Naive thymus-derived CD8-positive, alpha-beta T cell (primary cell): ENCODE measurements at regions of chr14 and their contacts with region 1.

Region 1: DNA sequence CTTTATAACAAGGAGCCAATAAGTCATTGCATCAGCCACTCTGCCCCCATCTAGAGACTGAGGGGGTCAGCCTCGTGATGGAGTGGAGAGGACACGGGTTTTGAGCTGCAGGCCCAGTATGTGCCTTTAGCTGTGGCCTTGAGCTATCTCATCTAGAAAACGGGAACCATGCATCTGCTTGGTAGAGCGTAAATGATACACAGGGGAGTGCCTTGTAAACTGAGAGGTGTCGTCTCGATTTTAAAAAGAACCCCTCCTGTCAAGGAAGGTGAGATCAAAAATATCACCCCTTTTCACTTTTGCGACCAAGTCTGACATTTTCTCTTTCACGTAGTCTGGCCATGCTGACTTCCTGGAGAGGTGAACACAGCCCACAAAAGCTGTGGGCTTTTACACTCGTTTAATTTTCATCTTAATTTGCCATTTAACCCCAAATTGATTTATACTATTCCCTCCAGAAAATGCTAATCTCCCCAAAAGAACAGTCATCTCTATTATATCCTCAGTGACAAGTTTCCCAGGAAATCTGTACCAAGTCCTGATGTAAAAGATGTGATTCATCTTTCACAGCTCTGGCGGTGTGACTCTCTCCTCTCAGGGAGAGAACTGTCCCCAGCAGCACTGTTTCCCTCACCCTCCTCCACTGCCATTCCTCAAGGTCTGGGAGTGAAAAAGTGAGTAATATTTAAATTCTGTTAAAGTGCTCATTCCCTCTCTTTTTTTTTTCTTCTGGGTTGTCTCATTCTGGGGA is 30.6 kb downstream of the VCPKMT start:
- DNase-seq: peak in 3 of 10 donors; percentile 26 to 49 (median 37)
- ATAC-seq: no peak
- H3K4me3 Mint-ChIP-seq: peak overlapping the region; percentile 15 to 82 (median 68)
- H3K27ac Mint-ChIP-seq: peak overlapping the region; percentile 79 to 97 (median 93)
- H3K4me1 Mint-ChIP-seq: peaks cover 39 to 94% (median 88%) of the 10 kb centered on the region in 4 donors
- H3K27me3 Mint-ChIP-seq: no peaks in the 10 kb centered on the region

Region 2: DNA sequence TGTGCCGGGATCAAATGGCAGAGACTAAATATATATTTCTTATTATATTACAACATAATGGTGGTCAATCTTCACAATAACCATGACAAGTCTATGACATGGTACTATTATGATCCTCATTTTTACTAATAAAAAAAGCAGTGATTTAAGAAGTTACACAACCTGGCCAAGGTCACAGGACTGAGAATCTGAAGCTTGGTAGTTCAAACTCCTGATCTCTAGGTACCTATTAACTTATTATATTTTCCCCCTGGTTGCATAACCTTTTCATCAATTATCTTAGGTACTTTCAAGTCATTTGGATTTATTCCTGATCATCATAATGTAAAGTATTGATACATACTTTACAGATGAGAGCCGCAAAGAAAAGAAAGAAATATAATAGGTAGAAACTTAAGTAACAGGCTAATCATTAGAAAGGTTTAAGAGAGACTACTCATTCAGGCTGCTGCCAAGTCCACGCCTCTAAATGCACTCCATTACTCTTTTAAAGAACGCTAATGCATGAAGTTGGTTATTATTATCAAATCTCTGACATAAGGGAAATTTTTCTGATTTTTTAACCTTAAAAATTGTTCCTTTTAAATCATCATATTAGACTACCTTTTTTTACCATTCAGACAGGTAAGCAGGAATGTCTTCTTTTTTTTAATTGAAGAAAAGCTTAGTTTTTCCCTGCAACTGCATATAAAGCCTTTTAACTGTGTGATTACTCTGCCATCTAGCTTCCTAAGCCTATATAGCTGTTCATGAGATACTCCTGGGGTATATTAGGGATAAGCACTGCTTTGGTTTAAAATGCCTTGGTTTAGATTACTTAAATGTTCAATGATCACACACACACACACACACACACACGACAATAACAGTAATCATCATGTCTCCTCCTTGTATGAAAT is 535.2 kb before region 1 on chr14:
- POLR2A ChIA-PET with region 1: no interaction called
- DNase-seq: no peak
- ATAC-seq: no peak
- H3K4me3 Mint-ChIP-seq: no peak overlapping the region
- H3K27ac Mint-ChIP-seq: no peak overlapping the region
- H3K4me1 Mint-ChIP-seq: no peaks in the 10 kb centered on the region
- H3K27me3 Mint-ChIP-seq: peaks cover 0 to 3% (median 0%) of the 10 kb centered on the region in 5 donors

Region 3: GRCh38 chr14:49852301-49853157 is 233.2 kb before region 1 on chr14 and contains the start of gene NEMF:
- POLR2A ChIA-PET with region 1: interaction called, 11 read pairs
- DNase-seq: peak; percentile 57 to 89 (median 78)
- ATAC-seq: peak; percentile 80 to 84
- H3K4me3 Mint-ChIP-seq: peak within 1 kb of the TSS; percentile 91 to 100 (median 96)
- H3K27ac Mint-ChIP-seq: peak within 1 kb of the TSS; percentile 93 to 99 (median 96)
- H3K4me1 Mint-ChIP-seq: peaks cover 20 to 48% (median 46%) of the 10 kb centered on the region in 4 donors
- H3K27me3 Mint-ChIP-seq: no peaks in the 10 kb centered on the region
- polyA plus RNA-seq, gene NEMF: 39.6 to 46.1 (median 43.5) TPM

Region 4: DNA sequence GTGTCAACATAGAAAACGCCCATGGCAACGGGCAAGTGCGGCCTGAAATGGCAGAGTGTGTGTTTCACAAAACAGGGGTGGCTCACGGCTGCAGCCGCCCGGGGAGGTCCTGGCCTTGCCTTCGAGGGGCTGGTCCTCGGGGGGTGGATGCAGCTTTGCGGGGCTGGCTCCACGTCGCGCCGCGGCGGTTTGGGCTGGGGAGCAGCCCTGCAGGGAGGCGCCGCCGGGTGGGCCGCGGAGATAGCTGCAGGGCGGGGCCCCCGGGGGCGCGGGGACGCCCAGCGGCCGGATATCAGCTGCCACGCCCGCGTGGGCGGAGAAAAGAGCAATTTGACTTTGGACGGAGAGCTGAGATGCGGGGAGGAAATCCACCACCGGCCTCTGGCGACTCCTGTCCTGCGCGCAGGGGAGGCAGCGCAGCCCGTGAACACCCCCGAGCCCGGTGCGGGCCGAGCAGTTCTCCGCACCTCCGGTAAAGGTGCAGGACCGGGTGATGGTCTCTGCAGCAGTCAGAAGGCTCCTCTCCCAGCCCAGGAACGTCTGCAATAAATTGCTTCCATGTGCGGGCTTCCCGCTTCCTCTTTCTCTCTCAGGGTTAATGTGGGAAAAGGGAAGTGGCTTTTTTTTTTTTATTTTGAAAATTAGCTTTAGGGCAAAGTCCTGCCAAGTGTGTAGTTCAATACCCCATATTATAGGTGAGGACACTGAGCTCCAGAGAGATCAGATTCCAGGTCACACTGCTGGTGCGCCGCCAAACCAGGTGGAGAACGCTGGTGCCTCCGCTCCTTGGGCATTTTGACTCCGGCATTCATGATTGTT is 82.3 kb before region 1 on chr14:
- POLR2A ChIA-PET with region 1: interaction called, 31 read pairs
- DNase-seq: peak; percentile 66 to 91 (median 76)
- ATAC-seq: peak; percentile 46 to 53
- H3K4me3 Mint-ChIP-seq: peak overlapping the region; percentile 77 to 94 (median 90)
- H3K27ac Mint-ChIP-seq: peak overlapping the region; percentile 96 to 99 (median 98)
- H3K4me1 Mint-ChIP-seq: peaks cover 34 to 62% (median 51%) of the 10 kb centered on the region in 4 donors
- H3K27me3 Mint-ChIP-seq: no peaks in the 10 kb centered on the region

Region 5: GRCh38 chr14:50067723-50068495 is 17.8 kb before region 1 on chr14:
- POLR2A ChIA-PET with region 1: interaction called, 133 read pairs
- DNase-seq: no peak
- ATAC-seq: no peak
- H3K4me3 Mint-ChIP-seq: no peak overlapping the region
- H3K27ac Mint-ChIP-seq: peak overlapping the region in 6 of 10 donors; percentile 14 to 98 (median 68)
- H3K4me1 Mint-ChIP-seq: peaks cover 30 to 67% (median 62%) of the 10 kb centered on the region in 4 donors
- H3K27me3 Mint-ChIP-seq: no peaks in the 10 kb centered on the region

Region 6: GRCh38 chr14:50106178-50106577 is 20.4 kb after region 1 on chr14:
- POLR2A ChIA-PET with region 1: interaction called, 18 read pairs
- DNase-seq: no peak
- ATAC-seq: no peak
- H3K4me3 Mint-ChIP-seq: no peak overlapping the region
- H3K27ac Mint-ChIP-seq: peak overlapping the region in 9 of 10 donors; percentile 16 to 90 (median 59)
- H3K4me1 Mint-ChIP-seq: peaks cover 5 to 38% (median 23%) of the 10 kb centered on the region in 4 donors
- H3K27me3 Mint-ChIP-seq: no peaks in the 10 kb centered on the region

Region 7: GRCh38 chr14:50425816-50426215 is 340.1 kb after region 1 on chr14:
- POLR2A ChIA-PET with region 1: no interaction called
- DNase-seq: no peak
- ATAC-seq: no peak
- H3K4me3 Mint-ChIP-seq: no peak overlapping the region
- H3K27ac Mint-ChIP-seq: no peak overlapping the region
- H3K4me1 Mint-ChIP-seq: no peaks in the 10 kb centered on the region
- H3K27me3 Mint-ChIP-seq: no peaks in the 10 kb centered on the region